ENCODE measurements at regions of chr4 and their contacts with region 1.

Region 1: GRCh38 chr4:39626261-39626660 is 12.4 kb downstream of the SMIM14 start:
- DNase-seq: no peak
- H3K4me3 ChIP-seq: no peak overlapping the region
- H3K27ac ChIP-seq: no peak overlapping the region
- H3K27me3 ChIP-seq: no peaks in the 10 kb centered on the region
- CTCF ChIP-seq: no peak

Region 2: DNA sequence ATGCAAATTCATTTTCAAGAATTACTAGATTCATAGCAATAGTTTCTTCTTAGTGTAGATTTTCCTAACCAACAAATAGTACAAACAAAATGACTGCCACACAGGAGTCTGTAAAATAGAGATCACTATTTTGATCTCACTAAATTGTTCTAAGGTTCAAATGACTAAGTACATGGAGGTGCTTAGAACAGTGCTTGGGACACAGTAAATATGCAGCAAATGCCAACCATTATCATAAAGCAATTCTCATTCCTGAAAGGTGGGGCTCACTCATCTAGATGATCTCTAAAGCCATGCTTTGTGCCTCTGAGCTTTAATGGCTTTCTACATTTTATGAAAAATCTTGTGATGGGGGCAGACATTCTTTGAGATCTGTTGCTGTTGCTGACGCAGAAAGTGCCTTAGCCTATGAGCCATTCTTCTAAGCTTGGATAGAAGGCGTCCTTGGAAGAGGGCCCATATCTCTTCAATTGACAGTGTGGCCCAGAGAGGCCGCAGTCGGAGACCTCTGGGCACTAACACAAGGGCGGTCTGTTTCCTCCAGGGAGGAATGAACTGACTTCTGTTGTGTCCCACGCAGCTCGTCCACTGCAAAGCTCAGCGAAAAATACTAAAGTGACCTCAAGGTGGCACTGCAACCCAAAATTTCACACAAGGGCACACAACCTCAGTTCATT is 867.0 kb before region 1 on chr4:
- CTCF ChIA-PET with region 1: no interaction called
- POLR2A ChIA-PET with region 1: no interaction called
- DNase-seq: peak; percentile 30
- H3K4me3 ChIP-seq: no peak overlapping the region
- H3K27ac ChIP-seq: no peak overlapping the region
- H3K27me3 ChIP-seq: no peaks in the 10 kb centered on the region
- CTCF ChIP-seq: peak; percentile 71

Region 3: GRCh38 chr4:39285111-39285795 is 341.0 kb before region 1 on chr4:
- CTCF ChIA-PET with region 1: no interaction called
- POLR2A ChIA-PET with region 1: interaction called, 13 read pairs
- DNase-seq: no peak
- H3K4me3 ChIP-seq: no peak overlapping the region
- H3K27ac ChIP-seq: no peak overlapping the region
- H3K27me3 ChIP-seq: no peaks in the 10 kb centered on the region
- CTCF ChIP-seq: no peak

Region 4: DNA sequence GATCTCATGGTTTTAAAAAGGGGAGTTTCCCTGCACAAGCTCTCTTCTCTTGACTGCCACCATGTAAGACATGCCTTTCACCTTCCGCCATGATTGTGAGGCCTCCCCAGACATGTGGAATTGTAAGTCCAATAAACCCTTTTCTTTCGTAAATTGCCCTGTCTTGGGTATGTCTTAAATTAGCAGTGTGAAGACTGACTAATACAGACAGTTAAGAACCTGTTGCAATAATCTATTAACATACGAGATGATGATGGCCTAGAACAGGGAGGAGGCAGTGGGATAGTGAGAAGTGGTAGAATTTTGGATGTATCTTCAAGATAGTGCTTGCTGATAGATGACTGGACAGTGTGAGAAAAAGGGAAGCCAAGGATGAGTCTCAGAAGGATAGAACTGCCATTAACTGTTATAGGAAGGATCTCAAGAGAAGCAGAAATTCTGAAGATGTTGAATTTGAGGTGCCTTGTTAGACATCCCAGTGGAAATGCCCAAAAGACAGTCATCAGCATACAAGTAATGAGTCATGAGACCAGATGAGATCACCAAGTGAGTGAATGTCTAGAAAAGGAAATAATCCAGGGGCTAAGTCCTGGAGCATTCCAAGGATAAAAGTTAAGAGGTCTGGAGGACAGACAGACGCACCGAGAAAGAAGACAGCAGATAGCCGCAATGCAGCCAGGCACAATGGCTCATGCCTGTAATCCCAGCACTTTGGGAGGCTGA is 60.2 kb before region 1 on chr4:
- CTCF ChIA-PET with region 1: no interaction called
- POLR2A ChIA-PET with region 1: no interaction called
- DNase-seq: peak; percentile 69
- H3K4me3 ChIP-seq: no peak overlapping the region
- H3K27ac ChIP-seq: peak overlapping the region; percentile 40
- H3K27me3 ChIP-seq: no peaks in the 10 kb centered on the region
- CTCF ChIP-seq: no peak

Region 5: GRCh38 chr4:39606747-39607146 is 19.5 kb before region 1 on chr4:
- CTCF ChIA-PET with region 1: no interaction called
- POLR2A ChIA-PET with region 1: no interaction called
- DNase-seq: no peak
- H3K4me3 ChIP-seq: no peak overlapping the region
- H3K27ac ChIP-seq: no peak overlapping the region
- H3K27me3 ChIP-seq: no peaks in the 10 kb centered on the region
- CTCF ChIP-seq: no peak

Region 6: DNA sequence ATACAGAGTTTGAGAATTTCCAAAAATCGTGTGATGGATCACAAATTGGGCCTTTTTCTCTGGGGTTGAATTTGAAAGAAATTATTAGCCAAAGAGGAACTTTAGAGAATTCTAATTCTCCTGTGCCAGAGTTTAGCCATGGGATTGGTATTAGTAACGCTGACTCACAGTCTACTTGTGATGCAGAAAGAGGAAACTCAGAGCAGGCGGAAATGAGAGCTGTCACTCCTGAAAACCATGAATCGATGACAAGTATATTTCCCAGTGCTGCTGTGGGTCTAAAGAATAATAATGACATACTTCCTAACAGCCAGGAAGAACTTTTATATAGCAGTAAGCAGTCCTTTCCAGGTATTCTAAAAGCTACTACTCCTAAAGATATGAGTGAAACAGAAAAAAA is 495.3 kb after region 1 on chr4:
- CTCF ChIA-PET with region 1: no interaction called
- POLR2A ChIA-PET with region 1: no interaction called
- DNase-seq: peak; percentile 16
- H3K4me3 ChIP-seq: no peak overlapping the region
- H3K27ac ChIP-seq: no peak overlapping the region
- H3K27me3 ChIP-seq: no peaks in the 10 kb centered on the region
- CTCF ChIP-seq: no peak

Measured in AG04450 (cell line).